Natural killer cell (primary cell): ENCODE measurements at regions of chr12 and their contacts with region 1.

Region 1: GRCh38 chr12:53321074-53321814 is at the start of gene AAAS:
- DNase-seq: peak; percentile 92 to 96
- ATAC-seq: peak; percentile 85 to 94 (median 85)
- H3K4me3 ChIP-seq: peak within 1 kb of the TSS; percentile 80
- H3K4me3 Mint-ChIP-seq: peak within 1 kb of the TSS; percentile 99
- H3K27ac ChIP-seq: peak within 1 kb of the TSS; percentile 78
- H3K27ac Mint-ChIP-seq: peak within 1 kb of the TSS; percentile 94 to 98
- H3K4me1 ChIP-seq: peaks cover 37% of the 10 kb centered on the region
- H3K4me1 Mint-ChIP-seq: peaks cover 33 to 43% of the 10 kb centered on the region in 2 donors
- H3K27me3 ChIP-seq: no peaks in the 10 kb centered on the region
- H3K27me3 Mint-ChIP-seq: no peaks in the 10 kb centered on the region
- CTCF ChIP-seq: peak; percentile 99
- total RNA-seq, gene AAAS: 34.3 to 50.4 (median 45.0) TPM

Region 2: DNA sequence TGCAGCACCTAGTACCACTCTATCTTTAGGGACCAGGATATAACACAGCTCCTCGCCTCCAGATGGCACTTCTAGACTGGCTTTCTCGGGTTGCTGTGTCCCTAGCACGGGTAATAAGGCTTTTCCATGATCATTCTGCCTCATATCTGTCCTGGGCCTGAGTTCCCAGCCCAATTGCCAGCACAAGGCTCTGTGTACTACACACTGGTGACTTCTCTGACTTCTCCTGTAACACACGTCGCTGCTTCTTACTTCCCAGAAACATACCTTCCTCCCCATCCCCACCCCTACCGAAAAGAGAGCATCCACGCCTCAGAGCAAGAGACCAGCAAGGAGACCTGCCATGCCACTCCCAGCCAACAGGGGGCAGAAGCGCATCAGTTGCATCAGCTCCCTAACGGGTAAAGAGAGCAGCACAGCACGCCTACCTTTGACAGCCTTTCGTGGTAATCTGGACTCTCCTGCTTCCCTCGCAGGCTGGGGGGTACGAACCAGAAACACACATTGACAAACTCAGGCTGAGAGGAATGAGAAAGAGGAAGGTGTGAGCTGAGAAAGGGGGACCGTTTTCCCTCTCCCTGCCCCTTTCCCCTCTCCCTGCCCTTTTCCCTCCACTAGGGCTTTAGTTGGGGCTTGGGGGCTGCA is 161.9 kb before region 1 on chr12:
- intact Hi-C with region 1: loop called (anchors 1 kb)
- DNase-seq: peak; percentile 84 to 94
- ATAC-seq: peak; percentile 93 to 100 (median 100)
- H3K4me3 ChIP-seq: no peak overlapping the region
- H3K4me3 Mint-ChIP-seq: no peak overlapping the region
- H3K27ac ChIP-seq: no peak overlapping the region
- H3K27ac Mint-ChIP-seq: peak overlapping the region in 1 of 2 donors; percentile 40
- H3K4me1 ChIP-seq: peaks cover 8% of the 10 kb centered on the region
- H3K4me1 Mint-ChIP-seq: peaks cover 9% of the 10 kb centered on the region in 2 donors
- H3K27me3 ChIP-seq: no peaks in the 10 kb centered on the region
- H3K27me3 Mint-ChIP-seq: no peaks in the 10 kb centered on the region
- CTCF ChIP-seq: peak; percentile 94

Region 3: DNA sequence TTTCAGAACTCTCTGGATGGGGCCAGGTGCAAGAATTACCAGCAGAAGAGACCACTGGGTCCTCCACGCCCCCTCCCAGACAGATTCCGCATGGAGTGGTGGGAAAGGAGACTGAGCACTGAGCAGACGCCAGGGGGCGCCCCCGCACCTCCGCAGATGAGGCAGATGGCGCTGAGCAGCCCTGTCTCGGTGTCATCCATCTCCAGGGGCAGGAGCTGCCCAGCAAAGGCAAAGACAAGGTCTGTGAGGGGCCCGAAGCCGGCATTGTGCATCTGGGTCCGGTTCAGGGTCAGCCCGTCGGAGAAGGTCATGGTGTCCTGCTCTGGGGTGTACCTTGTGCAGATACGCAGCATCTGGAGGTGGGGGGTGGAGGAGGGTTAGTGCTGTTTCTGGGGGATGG is 107.9 kb before region 1 on chr12:
- intact Hi-C with region 1: loop called (anchors 2 kb)
- DNase-seq: peak; percentile 84 to 90
- ATAC-seq: peak; percentile 59 to 82 (median 71)
- H3K4me3 ChIP-seq: no peak overlapping the region
- H3K4me3 Mint-ChIP-seq: no peak overlapping the region
- H3K27ac ChIP-seq: no peak overlapping the region
- H3K27ac Mint-ChIP-seq: peak overlapping the region; percentile 34 to 38
- H3K4me1 ChIP-seq: peaks cover 63% of the 10 kb centered on the region
- H3K4me1 Mint-ChIP-seq: peaks cover 60 to 78% of the 10 kb centered on the region in 2 donors
- H3K27me3 ChIP-seq: no peaks in the 10 kb centered on the region
- H3K27me3 Mint-ChIP-seq: no peaks in the 10 kb centered on the region
- CTCF ChIP-seq: peak; percentile 91

Region 4: GRCh38 chr12:53295070-53295890 is 26.0 kb before region 1 on chr12 and contains the start of gene PFDN5:
- intact Hi-C with region 1: loop called (anchors 1 kb)
- DNase-seq: peak; percentile 77 to 95
- ATAC-seq: peak; percentile 90 to 97 (median 92)
- H3K4me3 ChIP-seq: peak within 1 kb of the TSS; percentile 79
- H3K4me3 Mint-ChIP-seq: peak within 1 kb of the TSS; percentile 96
- H3K27ac ChIP-seq: peak within 1 kb of the TSS; percentile 75
- H3K27ac Mint-ChIP-seq: peak within 1 kb of the TSS; percentile 95 to 98
- H3K4me1 ChIP-seq: peaks cover 36% of the 10 kb centered on the region
- H3K4me1 Mint-ChIP-seq: peaks cover 42 to 46% of the 10 kb centered on the region in 2 donors
- H3K27me3 ChIP-seq: no peaks in the 10 kb centered on the region
- H3K27me3 Mint-ChIP-seq: no peaks in the 10 kb centered on the region
- CTCF ChIP-seq: no peak
- total RNA-seq, gene PFDN5: 365 to 450 (median 439) TPM

Region 5: DNA sequence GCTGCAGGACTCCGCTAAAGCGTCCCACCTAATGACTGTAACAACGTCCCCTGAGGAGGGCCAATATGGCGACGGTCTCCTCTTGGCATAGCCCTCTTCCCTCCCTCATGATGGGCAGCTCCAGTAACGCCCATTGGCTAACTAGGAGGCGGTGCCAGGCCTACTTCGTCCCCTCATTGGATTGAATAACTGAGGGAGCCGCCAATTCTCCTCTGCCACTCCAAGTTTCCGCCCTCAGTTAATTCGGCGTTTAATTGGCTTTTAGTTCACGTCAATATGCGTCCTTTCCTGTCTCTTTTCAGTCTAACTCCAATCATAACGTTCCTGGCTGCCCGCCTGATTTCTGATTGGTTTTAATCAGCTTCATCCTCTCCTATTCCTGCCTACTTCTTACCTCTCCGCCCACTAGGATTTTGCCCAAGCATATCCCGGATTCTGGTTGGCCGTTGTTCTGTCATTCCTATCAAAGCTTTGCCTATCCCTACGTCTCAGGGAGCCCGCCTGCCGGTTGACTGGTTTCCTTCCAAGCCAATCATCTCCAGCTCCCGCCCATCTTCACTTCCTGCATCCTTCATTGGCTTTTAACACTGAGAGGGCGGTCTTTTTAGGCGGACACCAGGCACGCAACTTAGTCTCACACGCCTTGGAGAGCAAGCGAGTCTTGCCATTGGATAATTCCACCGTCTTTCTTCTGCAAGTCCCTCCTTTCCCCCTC is 58.3 kb after region 1 on chr12:
- intact Hi-C with region 1: loop called (anchors 2 kb)
- DNase-seq: peak in 1 of 2 donors; percentile 100
- ATAC-seq: peak; percentile 73 to 87 (median 76)
- H3K4me3 ChIP-seq: peak overlapping the region; percentile 53
- H3K4me3 Mint-ChIP-seq: no peak overlapping the region
- H3K27ac ChIP-seq: peak overlapping the region; percentile 74
- H3K27ac Mint-ChIP-seq: no peak overlapping the region
- H3K4me1 ChIP-seq: peaks cover 41% of the 10 kb centered on the region
- H3K4me1 Mint-ChIP-seq: peaks cover 27 to 35% of the 10 kb centered on the region in 2 donors
- H3K27me3 ChIP-seq: no peaks in the 10 kb centered on the region
- H3K27me3 Mint-ChIP-seq: no peaks in the 10 kb centered on the region
- CTCF ChIP-seq: no peak

Region 6: DNA sequence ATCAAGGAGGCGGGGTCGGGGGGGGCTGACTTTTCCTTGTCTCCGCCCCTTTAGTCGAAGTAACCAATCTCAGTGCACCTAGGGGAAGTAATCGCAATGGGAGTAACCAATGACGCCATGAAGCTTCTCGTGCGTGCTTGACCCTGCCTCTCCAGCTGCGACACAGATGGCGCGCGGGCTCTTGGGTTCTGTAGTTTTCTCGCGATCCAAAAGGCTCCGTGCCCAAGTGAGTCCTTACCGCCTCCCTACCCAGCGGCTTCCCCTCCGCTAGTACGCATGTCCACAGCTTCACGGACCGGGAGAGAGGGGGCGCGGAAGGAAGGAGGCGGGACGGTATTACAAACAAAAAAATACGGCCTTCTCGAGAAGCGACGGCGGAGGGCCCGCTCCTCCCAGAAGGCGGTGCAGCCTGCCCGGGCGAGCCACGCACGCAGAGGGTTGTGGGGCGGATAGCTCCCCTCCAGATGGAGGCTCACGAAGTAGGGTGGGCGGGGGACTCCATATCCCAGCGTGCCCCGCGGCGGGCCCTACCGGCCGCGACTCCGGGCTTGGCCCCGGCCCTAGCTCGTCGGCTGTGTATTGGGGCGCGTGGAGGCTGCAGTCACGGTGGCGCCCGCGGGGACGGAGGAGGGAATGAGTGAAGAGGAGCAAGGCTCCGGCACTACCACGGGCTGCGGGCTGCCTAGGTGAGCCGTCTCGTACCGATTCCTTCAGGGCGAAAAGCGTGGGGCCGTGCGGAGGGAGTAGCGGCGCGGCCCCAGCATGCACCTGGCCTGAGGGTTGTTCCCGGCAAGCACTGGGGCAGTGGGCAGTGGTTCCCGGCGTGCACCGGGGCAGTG is 179.8 kb after region 1 on chr12 and contains the start of gene TARBP2:
- intact Hi-C with region 1: loop called (anchors 10 kb)
- DNase-seq: peak; percentile 97 to 99
- ATAC-seq: peak; percentile 78 to 92 (median 82)
- H3K4me3 ChIP-seq: peak within 1 kb of the TSS; percentile 56
- H3K4me3 Mint-ChIP-seq: peak within 1 kb of the TSS; percentile 99
- H3K27ac ChIP-seq: peak within 1 kb of the TSS; percentile 99
- H3K27ac Mint-ChIP-seq: peak within 1 kb of the TSS; percentile 98 to 99
- H3K4me1 ChIP-seq: peaks cover 34% of the 10 kb centered on the region
- H3K4me1 Mint-ChIP-seq: peaks cover 18 to 37% of the 10 kb centered on the region in 2 donors
- H3K27me3 ChIP-seq: no peaks in the 10 kb centered on the region
- H3K27me3 Mint-ChIP-seq: no peaks in the 10 kb centered on the region
- CTCF ChIP-seq: no peak
- total RNA-seq, gene TARBP2: 23.8 to 35.1 (median 33.7) TPM